CD4-positive, alpha-beta T cell (primary cell): ENCODE measurements at regions of chr7 and their contacts with region 1.

Region 1: GRCh38 chr7:5237286-5237685 is 45.5 kb upstream of the SLC29A4 start:
- DNase-seq: peak in 3 of 14 experiments; percentile 13 to 50 (median 41)
- ATAC-seq: no peak
- H3K4me3 ChIP-seq: no peak overlapping the region
- H3K4me3 Mint-ChIP-seq: no peak overlapping the region
- H3K27ac ChIP-seq: no peak overlapping the region
- H3K27ac Mint-ChIP-seq: no peak overlapping the region
- H3K4me1 ChIP-seq: peaks cover 19% of the 10 kb centered on the region
- H3K4me1 Mint-ChIP-seq: peaks cover 16% of the 10 kb centered on the region
- H3K27me3 ChIP-seq: peaks cover 0 to 8% of the 10 kb centered on the region in 2 experiments
- H3K27me3 Mint-ChIP-seq: peaks cover 13% of the 10 kb centered on the region
- CTCF ChIP-seq: no peak

Region 2: DNA sequence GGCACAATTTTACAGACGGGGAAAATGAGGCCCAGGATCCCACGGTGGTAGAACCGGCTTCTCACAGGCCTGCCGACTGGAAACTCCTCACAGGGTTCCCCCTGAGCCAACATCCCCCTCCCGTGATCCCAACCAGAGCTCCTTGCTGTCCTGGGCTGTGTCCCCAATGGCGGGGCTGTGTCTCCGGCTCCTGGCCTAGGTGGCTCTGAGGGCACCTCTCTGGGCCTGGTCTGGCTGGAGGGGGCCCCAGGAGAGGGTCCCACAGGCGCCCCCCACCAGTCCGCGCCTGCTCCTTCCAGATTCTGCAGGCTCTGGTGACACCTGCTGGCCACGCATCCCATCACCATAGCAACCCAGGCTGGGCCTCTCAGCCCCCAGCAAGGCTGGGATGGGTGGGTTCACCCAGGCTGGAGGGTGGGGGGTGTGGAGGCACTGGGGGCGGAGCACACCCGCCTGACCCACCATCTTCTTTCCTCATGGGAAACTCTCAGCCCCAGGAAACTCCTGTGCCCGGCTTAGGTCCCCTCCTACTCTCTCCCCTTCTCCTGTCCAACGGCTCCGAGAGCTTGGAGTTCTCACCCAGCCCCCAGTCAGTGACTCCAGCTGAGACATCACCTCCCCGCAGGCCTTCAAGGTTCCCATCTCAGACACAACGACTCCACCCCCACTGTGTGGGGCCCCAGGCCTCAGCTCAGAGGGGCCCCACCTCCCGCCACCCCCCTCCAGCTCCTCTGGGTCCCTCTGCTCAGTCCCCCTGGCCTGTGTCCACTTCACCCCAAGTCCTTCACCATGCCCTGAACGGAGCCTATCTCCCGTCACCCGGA is 213.5 kb after region 1 on chr7:
- CTCF ChIA-PET with region 1: interaction called, 5 read pairs
- POLR2A ChIA-PET with region 1: no interaction called
- intact Hi-C with region 1: loop called in 1 of 2 experiments (anchors 1 kb)
- DNase-seq: peak in 11 of 14 experiments; percentile 20 to 69 (median 41)
- ATAC-seq: peak; percentile 68
- H3K4me3 ChIP-seq: no peak overlapping the region
- H3K4me3 Mint-ChIP-seq: no peak overlapping the region
- H3K27ac ChIP-seq: no peak overlapping the region
- H3K27ac Mint-ChIP-seq: no peak overlapping the region
- H3K4me1 ChIP-seq: no peaks in the 10 kb centered on the region
- H3K4me1 Mint-ChIP-seq: no peaks in the 10 kb centered on the region
- H3K27me3 ChIP-seq: peaks cover 0 to 3% of the 10 kb centered on the region in 2 experiments
- H3K27me3 Mint-ChIP-seq: peaks cover 4% of the 10 kb centered on the region
- CTCF ChIP-seq: peak; percentile 71

Region 3: DNA sequence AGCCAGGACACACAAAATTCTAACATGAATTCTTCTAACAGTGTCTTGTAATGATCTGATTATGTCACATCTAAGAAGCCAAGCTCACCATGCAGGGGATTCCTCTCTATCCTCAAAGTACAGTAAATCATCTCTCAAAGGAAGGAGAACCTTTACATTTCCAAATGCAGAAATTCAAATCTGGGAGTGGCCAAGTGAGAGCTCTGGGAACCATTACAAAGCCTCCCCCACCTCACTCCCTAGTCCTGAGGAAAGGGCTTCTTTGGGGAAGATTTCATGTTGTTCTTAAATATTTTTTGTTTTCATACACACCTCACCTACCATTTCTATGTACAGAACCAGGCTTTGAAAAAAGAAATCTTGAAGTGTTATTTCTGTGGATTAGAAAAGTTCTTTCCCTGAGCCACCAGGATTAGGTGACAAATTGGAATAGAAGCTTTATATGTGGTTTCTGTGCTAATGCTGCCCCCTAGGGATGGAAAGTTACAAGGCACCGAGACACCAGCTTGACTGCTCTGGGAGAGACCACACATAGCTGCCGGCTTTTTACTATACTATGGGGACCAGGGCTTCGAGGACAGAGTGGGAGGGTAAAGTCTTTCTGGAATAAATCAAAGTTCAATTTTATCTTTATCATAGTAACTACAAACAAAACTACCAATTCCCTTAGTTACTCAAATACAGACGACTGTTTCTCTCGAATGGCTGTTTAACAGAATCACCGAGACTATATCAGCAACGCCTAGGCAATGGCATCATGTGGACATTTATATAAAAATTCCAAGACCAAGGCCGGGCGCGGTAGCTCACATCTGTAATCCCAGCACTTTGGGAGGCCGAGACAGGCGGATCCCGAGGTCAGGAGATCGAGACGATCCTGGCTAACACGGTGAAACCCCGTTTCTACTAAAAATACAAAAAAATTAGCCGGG is 428.1 kb after region 1 on chr7:
- CTCF ChIA-PET with region 1: no interaction called
- POLR2A ChIA-PET with region 1: no interaction called
- intact Hi-C with region 1: no loop called
- DNase-seq: peak; percentile 38 to 86 (median 50)
- ATAC-seq: peak; percentile 80
- H3K4me3 ChIP-seq: no peak overlapping the region
- H3K4me3 Mint-ChIP-seq: no peak overlapping the region
- H3K27ac ChIP-seq: no peak overlapping the region
- H3K27ac Mint-ChIP-seq: no peak overlapping the region
- H3K4me1 ChIP-seq: peaks cover 15% of the 10 kb centered on the region
- H3K4me1 Mint-ChIP-seq: peaks cover 21% of the 10 kb centered on the region
- H3K27me3 ChIP-seq: no peaks in the 10 kb centered on the region
- H3K27me3 Mint-ChIP-seq: no peaks in the 10 kb centered on the region
- CTCF ChIP-seq: peak; percentile 82